ENCODE measurements at regions of chr20 and their contacts with region 1.

Region 1: GRCh38 chr20:57991211-57991881 is 237.1 kb downstream of the ANKRD60 start:
- DNase-seq: no peak
- ATAC-seq: peak; percentile 91
- H3K4me3 ChIP-seq: no peak overlapping the region
- H3K27ac ChIP-seq: peak overlapping the region; percentile 56
- H3K4me1 ChIP-seq: peaks cover 19% of the 10 kb centered on the region; the same call in 1 of the 2 replicates
- H3K27me3 ChIP-seq: no peaks in the 10 kb centered on the region
- CTCF ChIP-seq: no peak

Region 2: DNA sequence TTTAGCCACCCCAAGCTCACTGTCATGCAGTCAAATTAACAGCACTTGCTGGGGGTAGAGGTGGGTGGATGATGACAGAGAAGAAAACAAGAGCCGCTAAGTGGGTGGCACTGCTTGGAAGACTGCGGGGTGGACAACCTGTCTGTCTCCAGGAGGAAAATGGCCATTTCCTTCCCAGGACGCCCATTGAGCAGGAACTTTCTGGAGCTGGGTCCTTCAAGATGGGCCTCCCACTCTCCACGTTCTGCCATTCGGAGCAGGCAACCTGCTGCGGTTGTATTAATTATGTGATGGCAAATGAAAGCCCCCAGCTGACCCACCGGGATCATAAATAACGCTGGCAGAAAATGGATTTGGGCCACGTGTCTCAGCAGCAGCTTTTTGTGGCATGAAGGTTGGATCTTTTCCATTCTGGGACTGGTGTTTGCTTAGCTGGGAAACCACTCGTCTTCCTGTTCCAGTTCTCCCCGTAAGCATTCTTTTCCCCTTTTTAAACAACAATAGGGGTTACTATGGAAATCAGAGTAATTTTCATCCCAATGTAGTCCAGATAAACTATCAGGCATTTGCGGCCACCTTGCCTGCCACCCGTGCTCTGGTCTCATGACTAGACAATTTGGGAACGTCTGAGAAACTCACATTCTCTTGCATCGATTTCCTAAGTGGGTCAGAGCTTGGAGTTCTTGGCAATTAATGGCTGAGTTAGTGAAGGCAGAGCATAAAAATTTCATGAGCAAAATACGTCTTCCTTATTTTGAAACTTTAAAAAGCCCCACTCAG is 21.6 kb after region 1 on chr20:
- CTCF ChIA-PET with region 1: interaction called, 11 read pairs
- POLR2A ChIA-PET with region 1: no interaction called
- in situ Hi-C with region 1: no loop called
- intact Hi-C with region 1: no loop called
- DNase-seq: no peak
- ATAC-seq: no peak
- H3K4me3 ChIP-seq: no peak overlapping the region
- H3K27ac ChIP-seq: peak overlapping the region; percentile 29
- H3K4me1 ChIP-seq: peaks cover 17% of the 10 kb centered on the region
- H3K27me3 ChIP-seq: no peaks in the 10 kb centered on the region
- CTCF ChIP-seq: no peak

Measured in Panc1 (cell line).